Right ventricle myocardium superior (tissue), 1 donor: ENCODE measurements at regions of chr20 and their contacts with region 1.

Region 1: DNA sequence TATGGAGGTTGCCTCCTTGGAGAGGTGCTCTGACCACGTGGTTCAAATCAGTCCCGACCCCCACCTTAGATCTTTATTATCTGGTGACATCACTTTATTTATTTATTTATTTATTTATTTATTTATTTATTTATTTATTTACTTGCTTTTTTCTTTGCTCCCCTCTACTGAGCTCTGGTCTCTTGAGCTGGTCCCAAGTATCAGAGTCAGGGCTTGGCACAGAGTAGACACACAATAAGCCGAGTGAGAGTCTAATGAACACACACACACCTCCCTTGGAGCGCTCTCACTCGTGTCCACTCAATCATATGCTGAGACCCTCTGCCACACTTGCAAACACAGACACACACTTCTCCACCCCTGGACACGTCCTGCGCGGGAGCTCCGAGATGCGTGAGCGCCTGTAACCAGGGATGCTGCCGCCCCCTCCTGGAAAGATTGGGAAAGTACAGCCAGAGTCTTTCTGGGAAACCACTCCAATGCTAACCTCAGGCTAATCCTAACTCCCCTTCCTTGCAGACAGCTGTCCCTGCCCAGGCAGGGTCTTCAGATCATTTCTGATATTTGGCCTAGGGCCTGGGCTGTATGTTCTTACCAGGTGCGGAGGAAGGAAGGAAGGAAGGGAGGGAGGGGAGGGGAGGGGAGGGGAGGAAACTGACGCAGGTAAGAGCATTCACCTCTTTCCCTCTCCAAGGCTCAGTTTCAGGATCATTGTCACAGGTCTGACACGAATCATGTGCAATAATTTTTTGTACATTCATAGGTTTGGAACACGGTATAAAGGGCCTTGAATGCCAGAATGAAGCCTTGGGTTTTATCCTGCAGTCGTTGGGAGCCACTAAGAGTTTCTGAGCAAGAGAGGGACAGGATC is 70.9 kb downstream of the STK35 start:
- DNase-seq: peak; percentile 78
- ATAC-seq: peak; percentile 93

Region 2: GRCh38 chr20:1965520-1966351 is 206.8 kb before region 1 on chr20:
- intact Hi-C with region 1: loop called (anchors 2 kb)
- DNase-seq: peak; percentile 87
- ATAC-seq: peak; percentile 91

Region 3: GRCh38 chr20:2086177-2086979 is 86.2 kb before region 1 on chr20:
- intact Hi-C with region 1: loop called (anchors 5 kb)
- DNase-seq: no peak
- ATAC-seq: peak; percentile 83